Natural killer cell (primary cell): ENCODE measurements at regions of chrX and their contacts with region 1.

Region 1: GRCh38 chrX:154980330-154981096 is 42.0 kb downstream of the F8 start:
- DNase-seq: peak; percentile 67 to 85
- ATAC-seq: peak; percentile 91 to 99 (median 99)
- H3K4me3 ChIP-seq: no peak overlapping the region
- H3K4me3 Mint-ChIP-seq: peak overlapping the region; percentile 67
- H3K27ac ChIP-seq: peak overlapping the region; percentile 34
- H3K27ac Mint-ChIP-seq: peak overlapping the region; percentile 34 to 85
- H3K4me1 ChIP-seq: peaks cover 3% of the 10 kb centered on the region
- H3K4me1 Mint-ChIP-seq: peaks cover 8 to 10% of the 10 kb centered on the region in 2 donors
- H3K27me3 ChIP-seq: no peaks in the 10 kb centered on the region
- H3K27me3 Mint-ChIP-seq: peaks cover 0 to 15% of the 10 kb centered on the region in 2 donors
- CTCF ChIP-seq: peak; percentile 64

Region 2: DNA sequence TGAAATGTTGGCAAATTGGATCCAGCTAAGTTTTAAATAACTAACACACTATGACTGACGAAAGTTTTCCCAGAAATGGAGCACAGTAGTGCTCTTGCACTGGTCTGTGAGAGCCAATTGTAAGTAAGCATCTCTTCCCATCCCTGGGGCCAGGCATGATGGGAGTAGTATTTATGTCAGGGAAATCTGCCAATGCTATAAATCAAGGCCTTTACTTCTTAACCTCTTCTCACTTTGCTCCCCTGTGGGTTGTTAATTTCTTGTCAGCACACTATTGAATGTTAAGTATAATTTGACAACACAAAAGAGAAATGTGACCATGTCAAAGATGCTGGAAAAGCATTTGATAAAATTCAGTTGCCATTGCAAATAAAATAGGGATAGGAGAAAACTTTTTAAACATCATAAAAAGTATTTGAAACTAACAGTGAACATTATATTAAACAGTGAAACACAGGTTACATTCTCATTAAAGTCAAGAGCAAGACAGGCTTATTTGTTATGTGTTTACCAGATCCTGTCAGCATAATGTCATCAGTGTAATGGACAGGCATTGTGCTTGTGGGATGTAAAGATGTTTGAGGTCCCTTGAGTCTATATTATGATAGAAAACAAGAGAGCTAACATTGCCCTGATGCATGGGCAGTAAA is 89.4 kb before region 1 on chrX:
- intact Hi-C with region 1: no loop called
- DNase-seq: no peak
- ATAC-seq: no peak
- H3K4me3 ChIP-seq: no peak overlapping the region
- H3K4me3 Mint-ChIP-seq: no peak overlapping the region
- H3K27ac ChIP-seq: no peak overlapping the region
- H3K27ac Mint-ChIP-seq: no peak overlapping the region
- H3K4me1 ChIP-seq: no peaks in the 10 kb centered on the region
- H3K4me1 Mint-ChIP-seq: peaks cover 8 to 12% of the 10 kb centered on the region in 2 donors
- H3K27me3 ChIP-seq: no peaks in the 10 kb centered on the region
- H3K27me3 Mint-ChIP-seq: no peaks in the 10 kb centered on the region
- CTCF ChIP-seq: no peak

Region 3: DNA sequence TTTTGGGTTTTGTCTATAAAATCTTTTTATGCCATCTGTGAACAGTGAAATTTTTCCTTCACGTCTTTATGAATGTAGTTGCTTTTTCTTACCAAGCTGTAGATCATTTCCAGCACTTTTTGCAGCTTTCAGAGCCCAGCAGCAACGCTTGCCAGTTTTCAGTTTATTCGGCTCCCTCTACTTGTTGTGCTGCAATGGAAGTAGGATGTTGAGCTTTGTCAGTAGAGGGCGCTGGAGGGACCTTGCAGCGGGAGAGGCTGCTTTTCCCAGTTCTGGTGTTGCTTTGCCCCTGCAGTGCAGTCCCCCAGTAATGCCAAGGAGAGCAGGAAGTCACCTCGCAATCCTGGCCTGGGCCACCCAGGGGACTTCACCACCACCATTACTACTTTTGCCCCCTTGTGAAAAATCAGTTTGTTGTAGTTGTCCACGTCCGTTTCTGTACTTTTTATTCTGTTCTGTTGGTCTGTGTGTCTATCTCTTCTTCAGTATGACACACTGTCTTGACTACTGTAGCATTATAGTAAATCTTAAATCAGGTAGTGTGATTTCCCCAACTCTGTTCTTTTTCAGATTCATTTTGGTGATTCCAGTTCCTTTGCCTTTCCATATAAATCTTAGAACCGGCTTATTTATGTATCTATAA is 68.6 kb after region 1 on chrX:
- intact Hi-C with region 1: loop called (anchors 2 kb)
- DNase-seq: peak in 1 of 2 donors; percentile 72
- ATAC-seq: peak in 2 of 3 donors; percentile 34 to 57
- H3K4me3 ChIP-seq: no peak overlapping the region
- H3K4me3 Mint-ChIP-seq: no peak overlapping the region
- H3K27ac ChIP-seq: no peak overlapping the region
- H3K27ac Mint-ChIP-seq: no peak overlapping the region
- H3K4me1 ChIP-seq: no peaks in the 10 kb centered on the region
- H3K4me1 Mint-ChIP-seq: peaks cover 0 to 22% of the 10 kb centered on the region in 2 donors
- H3K27me3 ChIP-seq: no peaks in the 10 kb centered on the region
- H3K27me3 Mint-ChIP-seq: no peaks in the 10 kb centered on the region
- CTCF ChIP-seq: peak; percentile 42

Region 4: GRCh38 chrX:155056877-155057792 is 76.6 kb after region 1 on chrX:
- intact Hi-C with region 1: loop called (anchors 1 kb)
- DNase-seq: peak; percentile 44 to 79
- ATAC-seq: peak; percentile 81 to 95 (median 90)
- H3K4me3 ChIP-seq: peak overlapping the region; percentile 18
- H3K4me3 Mint-ChIP-seq: peak overlapping the region; percentile 64
- H3K27ac ChIP-seq: peak overlapping the region; percentile 26
- H3K27ac Mint-ChIP-seq: peak overlapping the region in 1 of 2 donors; percentile 58
- H3K4me1 ChIP-seq: peaks cover 15% of the 10 kb centered on the region
- H3K4me1 Mint-ChIP-seq: peaks cover 7 to 20% of the 10 kb centered on the region in 2 donors
- H3K27me3 ChIP-seq: no peaks in the 10 kb centered on the region
- H3K27me3 Mint-ChIP-seq: no peaks in the 10 kb centered on the region
- CTCF ChIP-seq: peak; percentile 66

Region 5: GRCh38 chrX:155148724-155149537 is 168.4 kb after region 1 on chrX:
- intact Hi-C with region 1: loop called (anchors 1 kb)
- DNase-seq: peak in 1 of 2 donors; percentile 50
- ATAC-seq: peak in 1 of 3 donors; percentile 38
- H3K4me3 ChIP-seq: no peak overlapping the region
- H3K4me3 Mint-ChIP-seq: no peak overlapping the region
- H3K27ac ChIP-seq: no peak overlapping the region
- H3K27ac Mint-ChIP-seq: no peak overlapping the region
- H3K4me1 ChIP-seq: no peaks in the 10 kb centered on the region
- H3K4me1 Mint-ChIP-seq: no peaks in the 10 kb centered on the region
- H3K27me3 ChIP-seq: no peaks in the 10 kb centered on the region
- H3K27me3 Mint-ChIP-seq: peaks cover 3 to 19% of the 10 kb centered on the region in 2 donors
- CTCF ChIP-seq: no peak